IMR-90 (cell line): ENCODE measurements at regions of chr1 and their contacts with region 1.

Region 1: GRCh38 chr1:39901698-39902459 is at the start of gene MYCL:
- DNase-seq: peak; percentile 60
- ATAC-seq: peak; percentile 67
- H3K4me3 ChIP-seq: peak within 1 kb of the TSS; percentile 45
- H3K27ac ChIP-seq: no peak within 1 kb of the TSS
- H3K4me1 ChIP-seq: peaks cover 4% of the 10 kb centered on the region; the same call in 1 of the 2 replicates
- H3K27me3 ChIP-seq: peaks cover 22% of the 10 kb centered on the region
- CTCF ChIP-seq: peak; percentile 53
- POLR2A ChIP-seq: no peak
- RAD21 ChIP-seq: peak; percentile 54
- total RNA-seq, gene MYCL: 0.56 and 0.72 TPM in 2 replicates

Region 2: GRCh38 chr1:39829791-39830533 is 71.9 kb before region 1 on chr1:
- CTCF ChIA-PET with region 1: interaction called, 3 read pairs
- POLR2A ChIA-PET with region 1: no interaction called
- dilution Hi-C with region 1: no loop called
- in situ Hi-C with region 1: loop called (anchors 5 kb)
- intact Hi-C with region 1: no loop called
- DNase-seq: peak; percentile 40
- ATAC-seq: peak; percentile 27; the same call in 1 of the 2 replicates
- H3K4me3 ChIP-seq: no peak overlapping the region
- H3K27ac ChIP-seq: no peak overlapping the region
- H3K4me1 ChIP-seq: no peaks in the 10 kb centered on the region
- H3K27me3 ChIP-seq: peaks cover 9% of the 10 kb centered on the region
- CTCF ChIP-seq: no peak
- POLR2A ChIP-seq: no peak
- RAD21 ChIP-seq: no peak

Region 3: DNA sequence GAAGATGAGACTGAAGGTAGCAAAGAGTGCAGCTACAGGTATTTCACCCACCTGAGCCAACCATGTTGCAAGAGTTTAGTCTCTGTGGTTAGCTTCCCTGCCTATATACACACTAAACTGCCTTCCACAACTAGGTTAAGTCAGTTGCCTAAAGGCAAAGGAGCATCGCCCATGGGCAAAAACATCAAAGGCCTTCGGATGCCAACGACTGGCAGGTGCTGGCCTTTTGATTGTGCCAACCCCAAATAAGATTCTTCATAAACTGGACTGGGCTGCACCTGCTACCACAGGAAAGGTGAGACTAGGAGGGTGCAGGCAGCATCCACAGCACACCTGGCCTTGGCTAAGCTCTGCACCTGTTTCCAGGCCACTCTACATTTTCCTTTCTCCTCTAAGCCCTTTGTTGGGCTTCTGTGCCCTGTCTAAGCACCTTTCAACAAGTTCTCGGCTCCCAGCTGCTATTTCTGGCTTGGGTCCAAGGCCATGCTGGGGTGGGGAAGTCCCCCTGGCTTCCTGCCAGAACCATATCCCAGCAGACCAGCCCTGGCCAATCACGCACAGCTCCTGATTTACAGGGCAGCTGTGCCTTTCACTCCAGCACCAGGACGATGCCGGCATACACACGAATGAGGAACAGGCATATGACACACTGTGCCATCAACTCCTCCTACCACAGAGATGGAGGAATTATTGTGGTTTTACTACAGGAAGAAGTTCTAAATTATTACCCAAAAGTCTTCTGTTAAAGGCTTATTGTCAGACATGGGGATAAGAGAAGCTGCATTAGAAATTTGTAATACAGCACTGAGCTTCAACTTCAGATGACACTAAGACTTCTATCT is 56.4 kb before region 1 on chr1:
- CTCF ChIA-PET with region 1: no interaction called
- POLR2A ChIA-PET with region 1: interaction called, 3 read pairs
- dilution Hi-C with region 1: no loop called
- in situ Hi-C with region 1: no loop called
- intact Hi-C with region 1: loop called (anchors 2 kb)
- DNase-seq: peak; percentile 89
- ATAC-seq: peak; percentile 82
- H3K4me3 ChIP-seq: no peak overlapping the region
- H3K27ac ChIP-seq: peak overlapping the region; percentile 40; the same call in 1 of the 2 replicates
- H3K4me1 ChIP-seq: peaks cover 15% of the 10 kb centered on the region
- H3K27me3 ChIP-seq: no peaks in the 10 kb centered on the region
- CTCF ChIP-seq: no peak
- POLR2A ChIP-seq: no peak
- RAD21 ChIP-seq: no peak

Region 4: DNA sequence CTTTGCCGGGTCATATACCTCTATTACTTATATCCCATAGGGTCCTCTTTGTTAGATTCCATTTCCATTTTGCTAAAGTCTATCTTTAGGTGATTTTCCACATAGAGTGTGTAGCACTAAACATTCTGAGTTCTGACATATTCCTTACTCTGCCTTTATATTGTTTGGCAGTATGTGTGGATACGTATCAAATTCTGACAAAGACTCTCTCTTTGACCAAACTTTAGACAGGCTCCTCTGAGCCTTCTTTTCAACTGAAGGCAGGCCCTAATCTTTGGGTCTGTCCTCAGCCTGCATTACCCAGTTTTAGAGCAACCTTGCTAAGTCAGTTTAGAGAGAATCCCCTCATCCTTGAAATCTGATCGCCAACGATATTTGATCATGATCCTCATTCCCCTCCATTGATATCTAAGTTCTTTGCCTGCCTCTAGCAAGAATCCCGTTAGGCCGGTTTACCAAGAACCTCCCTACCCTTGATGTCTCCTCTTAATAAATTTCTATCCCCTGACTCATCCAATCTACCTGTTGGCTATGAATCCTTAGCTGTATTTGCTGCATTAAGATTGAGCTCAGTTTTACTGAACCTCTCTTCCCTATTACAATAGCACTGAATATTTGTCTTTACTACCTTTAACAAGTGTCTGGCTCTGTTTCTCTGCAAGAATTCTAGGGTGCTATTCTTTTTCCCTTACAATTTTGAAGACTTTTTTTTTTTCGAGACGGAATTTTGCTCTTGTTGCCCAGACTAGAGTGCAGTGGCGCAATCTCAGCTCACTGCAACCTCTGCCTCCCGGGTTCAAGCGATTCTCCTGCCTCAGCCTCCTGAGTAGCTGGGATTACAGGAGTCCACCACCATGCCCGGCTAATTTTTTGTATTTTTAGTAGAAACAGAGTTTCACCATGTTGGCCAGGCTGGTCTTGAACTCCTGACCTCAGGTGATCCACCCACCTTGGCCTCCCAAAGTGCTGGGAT is 205.7 kb after region 1 on chr1:
- CTCF ChIA-PET with region 1: no interaction called
- POLR2A ChIA-PET with region 1: no interaction called
- dilution Hi-C with region 1: no loop called
- in situ Hi-C with region 1: no loop called
- intact Hi-C with region 1: no loop called
- DNase-seq: no peak
- ATAC-seq: no peak
- H3K4me3 ChIP-seq: no peak overlapping the region
- H3K27ac ChIP-seq: no peak overlapping the region
- H3K4me1 ChIP-seq: no peaks in the 10 kb centered on the region
- H3K27me3 ChIP-seq: peaks cover 5% of the 10 kb centered on the region
- CTCF ChIP-seq: no peak
- POLR2A ChIP-seq: no peak
- RAD21 ChIP-seq: no peak